ENCODE measurements at regions of chrX and their contacts with region 1.

Region 1: DNA sequence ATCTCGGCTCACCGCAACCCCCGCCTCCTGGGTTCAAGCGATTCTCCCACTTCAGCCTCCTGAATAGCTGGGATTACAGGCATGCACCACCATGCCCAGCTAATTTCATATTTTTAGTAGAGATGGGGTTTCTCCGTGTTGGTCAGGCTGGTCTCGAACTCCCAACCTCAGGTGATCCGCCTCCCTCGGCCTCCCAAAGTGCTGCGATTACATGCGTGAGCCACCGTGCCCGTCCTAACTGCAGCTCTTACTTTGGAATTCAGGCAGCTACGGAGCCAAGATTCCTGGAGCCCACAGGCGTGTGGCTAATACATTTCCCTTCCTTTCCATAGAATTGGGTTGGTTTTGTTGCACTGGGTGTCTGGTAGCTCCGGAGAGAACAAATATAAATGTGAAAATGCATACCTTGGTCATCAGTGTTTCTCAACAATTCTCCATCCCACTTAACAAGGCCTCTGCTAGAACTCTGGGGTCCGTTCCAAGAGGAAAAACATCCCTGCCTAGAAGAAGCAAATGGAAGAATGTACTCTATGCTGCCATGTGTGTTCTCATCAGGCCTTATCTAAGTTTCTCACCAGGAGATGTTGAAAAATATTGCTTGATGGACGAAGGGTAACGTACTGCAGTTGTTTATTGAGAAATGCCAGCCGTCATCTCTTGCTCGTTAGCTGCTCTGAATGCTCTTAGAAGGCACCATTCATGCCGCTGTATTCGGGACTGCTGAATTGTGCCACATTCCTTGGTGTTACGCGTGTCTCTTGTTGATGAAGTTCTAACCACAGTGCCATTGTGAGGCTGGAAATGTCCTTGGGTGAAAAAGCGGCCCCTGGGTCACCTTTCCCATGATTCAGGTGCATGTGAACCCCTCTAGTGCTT is 50.6 kb upstream of the CD99 start:
- DNase-seq: no peak
- ATAC-seq: no peak
- H3K4me3 ChIP-seq: no peak overlapping the region
- H3K27ac ChIP-seq: no peak overlapping the region
- H3K4me1 ChIP-seq: no peaks in the 10 kb centered on the region
- H3K27me3 ChIP-seq: no peaks in the 10 kb centered on the region

Region 2: DNA sequence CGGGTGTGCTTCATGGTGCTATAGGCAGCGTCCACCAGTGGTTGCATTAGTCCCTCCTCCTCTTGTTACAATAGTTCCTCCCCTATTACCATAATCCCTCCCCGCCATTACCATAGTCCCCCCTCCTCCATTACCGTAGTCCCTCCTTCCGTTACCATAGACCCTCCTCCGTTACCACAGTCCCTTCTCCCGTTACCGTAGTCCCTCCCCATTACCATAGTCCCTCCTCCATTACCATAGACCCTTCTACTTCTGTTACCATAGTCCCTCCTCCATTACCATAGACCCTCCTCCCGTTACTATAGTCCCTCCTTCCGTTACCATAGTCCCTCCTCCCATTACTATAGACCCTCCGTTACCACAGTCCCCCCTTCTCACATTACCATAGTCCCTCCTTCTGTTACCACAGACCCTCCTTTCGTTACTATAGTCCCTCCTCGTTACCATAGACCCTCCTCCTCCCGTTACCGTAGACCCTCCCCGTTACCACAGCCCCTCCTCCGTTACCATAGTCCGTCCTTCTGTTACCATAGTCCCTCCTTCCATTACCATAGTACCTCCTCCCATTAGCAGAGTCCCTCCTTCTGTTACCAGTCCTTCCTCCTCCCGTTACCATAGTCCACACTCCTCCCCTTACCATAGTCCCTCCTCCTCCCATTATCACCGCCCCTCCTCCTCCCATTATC is 269.3 kb before region 1 on chrX:
- intact Hi-C with region 1: no loop called
- DNase-seq: no peak
- ATAC-seq: peak in 1 of 2 donors; percentile 93
- H3K4me3 ChIP-seq: no peak overlapping the region
- H3K27ac ChIP-seq: no peak overlapping the region
- H3K4me1 ChIP-seq: no peaks in the 10 kb centered on the region
- H3K27me3 ChIP-seq: no peaks in the 10 kb centered on the region

Region 3: GRCh38 chrX:2811271-2811670 is 170.8 kb after region 1 on chrX:
- intact Hi-C with region 1: loop called in 3 of 4 experiments (anchors 2 to 10 kb)
- DNase-seq: no peak
- ATAC-seq: no peak
- H3K4me3 ChIP-seq: no peak overlapping the region
- H3K27ac ChIP-seq: no peak overlapping the region
- H3K4me1 ChIP-seq: no peaks in the 10 kb centered on the region
- H3K27me3 ChIP-seq: no peaks in the 10 kb centered on the region

Region 4: DNA sequence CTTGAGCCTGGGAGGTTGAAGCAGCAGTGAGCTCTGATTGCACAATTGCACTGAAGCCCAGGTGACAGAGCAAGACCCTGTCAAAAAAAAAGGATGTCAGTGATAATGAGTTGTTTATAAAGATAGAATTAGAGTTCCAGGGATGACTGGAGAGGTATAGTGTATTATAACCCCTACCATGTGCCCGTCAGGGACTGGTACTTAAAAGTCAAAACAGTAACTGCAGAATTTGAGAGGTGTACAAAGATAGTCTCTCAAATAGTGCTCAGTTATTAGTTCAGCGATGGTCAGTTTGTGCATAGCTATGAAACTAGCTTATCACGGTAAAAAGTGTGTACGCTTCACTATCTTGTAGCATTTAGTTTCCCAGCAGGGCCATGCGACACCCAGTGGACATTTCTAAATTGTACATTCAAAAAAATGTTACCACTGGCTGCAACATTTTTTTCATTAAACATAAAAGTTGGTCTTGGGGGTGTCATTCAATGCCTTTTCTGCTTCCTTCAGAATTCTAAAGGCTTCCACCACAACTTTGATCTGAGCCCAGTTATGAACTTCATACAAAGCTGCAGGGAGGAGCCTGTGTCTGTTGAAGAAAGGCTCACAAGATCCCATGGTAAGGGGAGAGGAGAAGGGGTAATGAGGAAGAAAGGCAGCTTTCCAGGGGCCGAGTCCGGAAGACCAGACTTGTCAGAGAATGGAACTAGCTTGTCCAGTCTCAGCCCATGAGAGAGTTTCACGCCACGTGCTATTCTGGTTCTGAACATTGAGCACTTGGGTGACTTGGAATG is 179.0 kb after region 1 on chrX:
- intact Hi-C with region 1: loop called in 2 of 4 experiments (anchors 5 to 10 kb)
- DNase-seq: no peak
- ATAC-seq: no peak
- H3K4me3 ChIP-seq: no peak overlapping the region
- H3K27ac ChIP-seq: no peak overlapping the region
- H3K4me1 ChIP-seq: no peaks in the 10 kb centered on the region
- H3K27me3 ChIP-seq: no peaks in the 10 kb centered on the region

Measured in right cardiac atrium (tissue), 5 donors.